HepG2 (cell line): ENCODE measurements at regions of chr10 and their contacts with region 1.

Region 1: DNA sequence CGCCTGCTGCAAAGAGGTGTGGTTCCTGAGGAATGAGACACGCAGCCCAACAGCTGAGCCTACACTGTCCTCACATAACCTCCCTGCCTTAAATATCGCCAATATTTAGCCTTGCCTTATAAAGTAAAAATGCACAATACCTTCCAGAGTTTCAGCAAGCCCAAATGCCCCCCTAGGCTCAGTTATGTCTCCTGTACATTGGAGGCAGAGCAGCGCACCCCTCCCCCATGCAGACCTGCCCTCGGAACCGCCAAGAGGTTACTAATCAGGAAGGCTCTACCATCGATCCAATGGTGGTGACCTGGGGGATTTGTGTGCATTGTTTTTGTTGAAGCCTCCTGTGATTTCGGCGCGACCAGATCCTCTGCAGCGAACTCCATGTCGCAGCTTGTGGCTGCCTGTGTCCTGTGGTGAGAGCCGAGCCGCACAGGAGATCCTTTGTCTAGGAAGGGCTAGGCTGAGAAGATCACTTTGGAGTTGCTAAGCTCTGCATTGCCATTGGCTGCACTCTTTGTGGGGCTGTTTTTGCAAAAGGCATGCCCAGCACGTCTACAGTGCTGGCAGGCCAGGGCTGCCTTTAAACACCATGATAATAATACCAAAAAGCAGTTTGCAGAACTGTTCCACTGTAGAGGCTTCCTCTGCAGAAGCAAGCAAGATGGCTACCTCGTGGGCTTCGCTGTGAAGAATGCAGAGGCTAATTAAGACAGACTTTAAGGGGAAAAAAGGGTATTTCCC is 40.1 kb downstream of the TET1 start:
- DNase-seq: peak; percentile 95
- ATAC-seq: peak; percentile 97
- H3K4me3 ChIP-seq: peak overlapping the region; percentile 39 to 76 (median 58)
- H3K27ac ChIP-seq: peak overlapping the region; percentile 81
- H3K4me1 ChIP-seq: peaks cover 72% of the 10 kb centered on the region
- H3K27me3 ChIP-seq: no peaks in the 10 kb centered on the region
- CTCF ChIP-seq: peak; percentile 17; the same call in 1 of the 2 replicates
- EP300 ChIP-seq: peak in 1 of 2 experiments; percentile 49; a peak in 2 of 4 replicates
- POLR2A ChIP-seq: peak; percentile 41 to 50; a peak in 3 of 4 replicates
- RAD21 ChIP-seq: no peak

Region 2: GRCh38 chr10:68697106-68697505 is 96.9 kb after region 1 on chr10:
- CTCF ChIA-PET with region 1: no interaction called
- POLR2A ChIA-PET with region 1: no interaction called
- in situ Hi-C with region 1: no loop called
- intact Hi-C with region 1: loop called (anchors 10 kb)
- DNase-seq: no peak
- ATAC-seq: no peak
- H3K4me3 ChIP-seq: no peak overlapping the region
- H3K27ac ChIP-seq: no peak overlapping the region
- H3K4me1 ChIP-seq: 0 out of 2 replicates have a peak, but pooled peaks cover 6% of the 10 kb centered on the region
- H3K27me3 ChIP-seq: no peaks in the 10 kb centered on the region
- CTCF ChIP-seq: no peak
- EP300 ChIP-seq: no peak
- POLR2A ChIP-seq: no peak
- RAD21 ChIP-seq: no peak